Adrenal gland (tissue), 19 donors: ENCODE measurements at regions of chr3 and their contacts with region 1.

Region 1: GRCh38 chr3:42652611-42653302 is 740 bp upstream of the ZBTB47 start:
- DNase-seq: peak; percentile 40 to 83 (median 73)
- H3K4me3 ChIP-seq: peak overlapping the region in 2 of 4 donors; percentile 58 to 86
- H3K27ac ChIP-seq: peak overlapping the region in 4 of 5 donors; percentile 27 to 94 (median 80)
- H3K4me1 ChIP-seq: peaks cover 36 to 45% of the 10 kb centered on the region in 2 donors
- H3K27me3 ChIP-seq: no peaks in the 10 kb centered on the region
- CTCF ChIP-seq: no peak
- POLR2A ChIP-seq: peak; percentile 62 to 88

Region 2: GRCh38 chr3:42600111-42600988 is 52.4 kb before region 1 on chr3 and contains the start of gene NKTR:
- intact Hi-C with region 1: loop called (anchors 5 to 10 kb)
- DNase-seq: peak; percentile 97 to 100 (median 99)
- H3K4me3 ChIP-seq: peak within 1 kb of the TSS; percentile 43 to 87 (median 84)
- H3K27ac ChIP-seq: peak within 1 kb of the TSS; percentile 95 to 98 (median 96)
- H3K4me1 ChIP-seq: peaks cover 3 to 19% of the 10 kb centered on the region in 2 donors
- H3K27me3 ChIP-seq: no peaks in the 10 kb centered on the region
- CTCF ChIP-seq: peak in 1 of 6 experiments; percentile 2
- POLR2A ChIP-seq: peak; percentile 82 to 89
- total RNA-seq, gene NKTR: 12.7 to 114 (median 53.9) TPM